ENCODE measurements at regions of chr4 and their contacts with region 1.

Region 1: GRCh38 chr4:169566021-169566818 is 46.2 kb downstream of the NEK1 start:
- DNase-seq: peak in 6 of 14 experiments; percentile 6 to 60 (median 47)
- ATAC-seq: peak; percentile 43
- H3K4me3 ChIP-seq: no peak overlapping the region
- H3K4me3 Mint-ChIP-seq: no peak overlapping the region
- H3K27ac ChIP-seq: no peak overlapping the region
- H3K27ac Mint-ChIP-seq: no peak overlapping the region
- H3K4me1 ChIP-seq: no peaks in the 10 kb centered on the region
- H3K4me1 Mint-ChIP-seq: peaks cover 4% of the 10 kb centered on the region
- H3K27me3 ChIP-seq: no peaks in the 10 kb centered on the region
- H3K27me3 Mint-ChIP-seq: no peaks in the 10 kb centered on the region
- CTCF ChIP-seq: peak; percentile 69

Region 2: DNA sequence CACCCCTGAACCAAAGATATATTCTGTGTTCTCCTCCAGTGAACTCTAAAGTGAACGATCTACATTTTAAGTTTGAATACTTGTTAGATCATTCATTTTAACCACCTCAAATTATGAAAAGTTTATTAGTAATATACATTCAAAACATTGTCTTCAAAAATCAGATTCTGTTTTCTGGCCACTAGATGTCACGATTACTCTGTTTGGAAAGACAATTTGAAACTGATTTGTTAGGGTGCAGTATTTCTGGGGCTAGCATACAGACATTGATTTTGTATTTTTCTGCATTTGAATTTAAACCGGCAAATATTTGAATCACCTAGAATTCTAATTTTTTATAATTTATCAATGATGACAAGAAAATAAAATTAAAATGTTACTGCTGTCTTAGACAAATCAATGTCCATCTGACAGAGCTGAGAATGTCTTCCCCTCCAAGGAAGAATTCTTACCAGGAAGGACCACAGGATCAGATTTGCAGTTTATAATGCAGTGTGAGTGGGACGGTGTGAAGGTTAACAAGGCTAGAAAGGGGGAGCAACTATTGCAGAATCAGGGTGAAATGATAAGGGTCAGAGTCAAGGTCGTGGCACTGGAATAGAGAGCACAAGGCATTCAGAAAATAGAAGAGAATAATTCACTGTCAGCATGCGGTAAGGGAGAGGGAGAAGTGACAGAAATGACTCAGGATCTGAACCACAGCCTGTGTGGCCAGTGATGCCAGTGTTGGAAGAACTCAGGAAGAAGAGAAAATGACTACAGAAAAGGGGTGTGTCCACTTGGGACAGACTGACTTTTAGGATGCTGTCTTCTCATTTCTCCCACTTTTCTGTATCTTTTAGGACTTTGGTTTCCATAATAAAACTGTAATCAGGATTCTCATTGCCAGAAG is 1382.3 kb before region 1 on chr4:
- CTCF ChIA-PET with region 1: no interaction called
- POLR2A ChIA-PET with region 1: no interaction called
- intact Hi-C with region 1: loop called in 1 of 2 experiments (anchors 5 kb)
- DNase-seq: peak in 3 of 14 experiments; percentile 20 to 30 (median 26)
- ATAC-seq: no peak
- H3K4me3 ChIP-seq: no peak overlapping the region
- H3K4me3 Mint-ChIP-seq: no peak overlapping the region
- H3K27ac ChIP-seq: no peak overlapping the region
- H3K27ac Mint-ChIP-seq: no peak overlapping the region
- H3K4me1 ChIP-seq: no peaks in the 10 kb centered on the region
- H3K4me1 Mint-ChIP-seq: no peaks in the 10 kb centered on the region
- H3K27me3 ChIP-seq: no peaks in the 10 kb centered on the region
- H3K27me3 Mint-ChIP-seq: no peaks in the 10 kb centered on the region
- CTCF ChIP-seq: peak; percentile 60

Region 3: GRCh38 chr4:168923526-168924194 is 642.6 kb before region 1 on chr4:
- CTCF ChIA-PET with region 1: no interaction called
- POLR2A ChIA-PET with region 1: no interaction called
- intact Hi-C with region 1: loop called (anchors 2 kb)
- DNase-seq: peak in 13 of 14 experiments; percentile 3 to 79 (median 38)
- ATAC-seq: peak; percentile 46
- H3K4me3 ChIP-seq: no peak overlapping the region
- H3K4me3 Mint-ChIP-seq: no peak overlapping the region
- H3K27ac ChIP-seq: no peak overlapping the region
- H3K27ac Mint-ChIP-seq: no peak overlapping the region
- H3K4me1 ChIP-seq: no peaks in the 10 kb centered on the region
- H3K4me1 Mint-ChIP-seq: no peaks in the 10 kb centered on the region
- H3K27me3 ChIP-seq: no peaks in the 10 kb centered on the region
- H3K27me3 Mint-ChIP-seq: no peaks in the 10 kb centered on the region
- CTCF ChIP-seq: peak; percentile 86

Region 4: DNA sequence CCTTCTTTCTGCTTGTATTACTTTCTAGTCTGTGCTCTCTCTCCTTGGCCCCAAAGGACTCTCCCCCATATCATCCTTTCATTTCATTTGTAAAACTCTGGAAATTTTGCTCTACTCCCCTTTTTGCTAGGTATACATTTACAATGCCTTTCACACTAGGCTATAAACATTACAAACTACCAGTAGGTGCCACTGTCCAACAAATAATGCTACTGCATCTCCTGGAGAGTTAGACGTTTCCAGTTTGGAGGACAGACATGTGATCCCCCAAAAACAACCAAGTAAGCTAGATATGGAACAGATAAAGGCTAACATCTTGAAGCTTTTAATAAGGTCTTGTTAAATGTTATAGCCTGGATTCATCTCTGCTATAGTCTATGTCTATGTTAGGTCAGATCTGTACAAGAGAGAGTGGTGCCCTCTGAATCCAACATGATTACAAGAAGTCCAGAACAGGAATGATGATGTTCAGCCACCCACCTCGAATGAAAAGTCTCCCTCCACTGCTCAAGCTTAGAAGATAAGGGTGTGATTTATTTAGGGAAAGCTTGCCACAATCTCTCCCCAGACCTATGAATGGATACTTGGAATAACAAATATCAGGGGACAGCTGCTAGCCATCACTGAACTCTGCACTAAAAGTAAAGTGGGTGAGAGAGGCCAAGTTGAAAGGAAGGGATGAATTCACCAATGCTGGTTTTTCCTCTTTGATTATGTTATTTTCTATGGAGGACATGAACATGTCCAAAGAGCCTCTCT is 570.5 kb before region 1 on chr4:
- CTCF ChIA-PET with region 1: no interaction called
- POLR2A ChIA-PET with region 1: no interaction called
- intact Hi-C with region 1: loop called (anchors 5 kb)
- DNase-seq: peak in 3 of 14 experiments; percentile 27 to 34 (median 29)
- ATAC-seq: no peak
- H3K4me3 ChIP-seq: no peak overlapping the region
- H3K4me3 Mint-ChIP-seq: no peak overlapping the region
- H3K27ac ChIP-seq: no peak overlapping the region
- H3K27ac Mint-ChIP-seq: no peak overlapping the region
- H3K4me1 ChIP-seq: no peaks in the 10 kb centered on the region
- H3K4me1 Mint-ChIP-seq: peaks cover 8% of the 10 kb centered on the region
- H3K27me3 ChIP-seq: no peaks in the 10 kb centered on the region
- H3K27me3 Mint-ChIP-seq: no peaks in the 10 kb centered on the region
- CTCF ChIP-seq: no peak

Region 5: GRCh38 chr4:170008371-170008770 is 442.2 kb after region 1 on chr4:
- CTCF ChIA-PET with region 1: no interaction called
- POLR2A ChIA-PET with region 1: no interaction called
- intact Hi-C with region 1: no loop called
- DNase-seq: no peak
- ATAC-seq: no peak
- H3K4me3 ChIP-seq: no peak overlapping the region
- H3K4me3 Mint-ChIP-seq: no peak overlapping the region
- H3K27ac ChIP-seq: no peak overlapping the region
- H3K27ac Mint-ChIP-seq: no peak overlapping the region
- H3K4me1 ChIP-seq: no peaks in the 10 kb centered on the region
- H3K4me1 Mint-ChIP-seq: peaks cover 10% of the 10 kb centered on the region
- H3K27me3 ChIP-seq: no peaks in the 10 kb centered on the region
- H3K27me3 Mint-ChIP-seq: peaks cover 13% of the 10 kb centered on the region
- CTCF ChIP-seq: no peak

Region 6: DNA sequence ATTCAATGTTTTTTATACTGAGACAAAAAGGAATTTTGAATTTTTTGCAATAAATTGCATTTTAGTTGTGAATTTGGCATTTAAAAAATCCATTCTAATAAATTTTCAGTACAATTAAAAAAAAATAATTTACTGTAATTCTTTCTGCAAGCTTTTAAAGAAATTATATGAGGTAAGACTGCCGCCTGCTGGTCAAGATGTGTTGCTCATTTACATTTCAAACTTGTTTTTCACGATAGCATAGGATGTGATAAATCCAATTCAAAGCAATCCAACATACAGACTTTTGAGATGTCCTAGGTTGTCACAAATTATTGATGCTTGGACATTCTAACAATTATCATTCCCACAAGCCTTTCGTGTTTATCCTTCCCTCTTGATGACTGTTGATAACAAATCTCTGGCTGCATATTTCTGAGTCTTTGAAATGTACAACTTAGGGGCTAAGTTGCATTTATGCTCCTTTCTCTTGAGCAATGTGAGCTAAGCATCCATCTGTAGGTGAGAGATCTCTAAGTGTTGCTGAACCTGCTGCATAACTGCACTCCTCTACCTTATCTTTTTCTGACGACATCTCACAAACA is 481.6 kb after region 1 on chr4:
- CTCF ChIA-PET with region 1: no interaction called
- POLR2A ChIA-PET with region 1: no interaction called
- intact Hi-C with region 1: loop called in 1 of 2 experiments (anchors 5 kb)
- DNase-seq: peak; percentile 27 to 79 (median 46)
- ATAC-seq: no peak
- H3K4me3 ChIP-seq: no peak overlapping the region
- H3K4me3 Mint-ChIP-seq: no peak overlapping the region
- H3K27ac ChIP-seq: no peak overlapping the region
- H3K27ac Mint-ChIP-seq: no peak overlapping the region
- H3K4me1 ChIP-seq: no peaks in the 10 kb centered on the region
- H3K4me1 Mint-ChIP-seq: no peaks in the 10 kb centered on the region
- H3K27me3 ChIP-seq: no peaks in the 10 kb centered on the region
- H3K27me3 Mint-ChIP-seq: peaks cover 5% of the 10 kb centered on the region
- CTCF ChIP-seq: peak; percentile 89

Measured in CD4-positive, alpha-beta T cell (primary cell).